PC-9 (cell line): ENCODE measurements at regions of chr17 and their contacts with region 1.

Region 1: GRCh38 chr17:29640413-29640812 is 17.7 kb upstream of the CORO6 start:
- DNase-seq: no peak
- H3K4me3 ChIP-seq: no peak overlapping the region
- H3K27ac ChIP-seq: peak overlapping the region; percentile 88
- H3K4me1 ChIP-seq: peaks cover 44% of the 10 kb centered on the region
- H3K27me3 ChIP-seq: no peaks in the 10 kb centered on the region
- CTCF ChIP-seq: no peak

Region 2: DNA sequence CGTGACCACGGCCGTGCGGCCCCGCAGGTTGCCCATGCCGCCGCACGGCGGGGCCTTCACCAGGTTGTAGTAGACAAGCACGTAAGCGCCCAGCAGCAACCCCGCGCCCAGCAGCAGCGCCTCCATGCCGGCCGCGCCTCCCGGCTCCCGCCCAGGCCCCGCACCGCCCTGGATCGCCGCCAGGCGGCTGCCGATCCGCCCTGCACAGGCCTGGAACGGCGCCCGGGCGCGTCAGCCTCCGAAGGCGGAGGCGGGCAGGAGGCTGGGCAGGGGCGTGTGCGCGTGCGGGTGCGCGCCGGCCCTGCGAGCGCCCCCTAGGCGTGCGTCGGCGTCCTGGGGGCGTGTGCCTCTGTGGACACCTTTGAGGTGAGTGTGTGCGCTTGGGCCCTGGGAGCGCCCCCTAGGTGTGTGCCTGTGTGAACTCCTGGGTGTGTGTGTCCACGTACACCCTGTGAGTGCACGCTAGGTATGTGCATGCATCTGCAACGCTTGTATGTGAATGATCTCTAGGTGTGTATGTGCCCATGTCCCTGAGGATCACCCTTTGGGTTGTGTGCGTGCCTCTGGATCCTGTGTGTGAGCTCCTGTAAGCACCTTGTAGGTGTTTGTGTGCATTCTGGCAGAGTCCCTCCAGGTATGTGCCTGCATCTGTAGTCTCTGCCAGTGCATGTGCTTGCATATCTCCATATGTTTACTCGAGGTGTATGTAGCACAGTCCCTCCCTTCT is 737.4 kb before region 1 on chr17 and contains the start of gene DHRS13:
- CTCF ChIA-PET with region 1: no interaction called
- POLR2A ChIA-PET with region 1: no interaction called
- intact Hi-C with region 1: no loop called
- DNase-seq: peak; percentile 85 to 94
- H3K4me3 ChIP-seq: peak within 1 kb of the TSS; percentile 73
- H3K27ac ChIP-seq: no peak within 1 kb of the TSS
- H3K4me1 ChIP-seq: peaks cover 15% of the 10 kb centered on the region
- H3K27me3 ChIP-seq: no peaks in the 10 kb centered on the region
- CTCF ChIP-seq: peak; percentile 88
- total RNA-seq, gene DHRS13: 15.8 and 17.5 TPM in 2 replicates

Region 3: GRCh38 chr17:29341751-29342150 is 298.7 kb before region 1 on chr17:
- CTCF ChIA-PET with region 1: no interaction called
- POLR2A ChIA-PET with region 1: no interaction called
- intact Hi-C with region 1: no loop called
- DNase-seq: no peak
- H3K4me3 ChIP-seq: no peak overlapping the region
- H3K27ac ChIP-seq: no peak overlapping the region
- H3K4me1 ChIP-seq: no peaks in the 10 kb centered on the region
- H3K27me3 ChIP-seq: no peaks in the 10 kb centered on the region
- CTCF ChIP-seq: no peak

Region 4: GRCh38 chr17:29622337-29623282 is 17.8 kb before region 1 on chr17 and contains the start of gene CORO6:
- CTCF ChIA-PET with region 1: interaction called, 12 read pairs
- POLR2A ChIA-PET with region 1: interaction called, 5 read pairs
- intact Hi-C with region 1: loop called (anchors 1 kb)
- DNase-seq: peak in 1 of 2 experiments; percentile 71
- H3K4me3 ChIP-seq: peak within 1 kb of the TSS; percentile 96
- H3K27ac ChIP-seq: peak within 1 kb of the TSS; percentile 36
- H3K4me1 ChIP-seq: peaks cover 58% of the 10 kb centered on the region
- H3K27me3 ChIP-seq: no peaks in the 10 kb centered on the region
- CTCF ChIP-seq: no peak
- total RNA-seq, gene CORO6: 35.0 and 52.1 TPM in 2 replicates

Region 5: GRCh38 chr17:29718446-29719039 is 78.1 kb after region 1 on chr17:
- CTCF ChIA-PET with region 1: no interaction called
- POLR2A ChIA-PET with region 1: no interaction called
- intact Hi-C with region 1: no loop called
- DNase-seq: peak in 1 of 2 experiments; percentile 69
- H3K4me3 ChIP-seq: no peak overlapping the region
- H3K27ac ChIP-seq: no peak overlapping the region
- H3K4me1 ChIP-seq: 0 out of 2 replicates have a peak, but pooled peaks cover 10% of the 10 kb centered on the region
- H3K27me3 ChIP-seq: no peaks in the 10 kb centered on the region
- CTCF ChIP-seq: no peak

Region 6: GRCh38 chr17:29760761-29761696 is 120.6 kb after region 1 on chr17:
- CTCF ChIA-PET with region 1: interaction called, 3 read pairs
- POLR2A ChIA-PET with region 1: no interaction called
- intact Hi-C with region 1: loop called (anchors 1 kb)
- DNase-seq: peak; percentile 65 to 85
- H3K4me3 ChIP-seq: peak overlapping the region; percentile 95
- H3K27ac ChIP-seq: peak overlapping the region; percentile 58
- H3K4me1 ChIP-seq: peaks cover 12% of the 10 kb centered on the region
- H3K27me3 ChIP-seq: no peaks in the 10 kb centered on the region
- CTCF ChIP-seq: no peak

Region 7: DNA sequence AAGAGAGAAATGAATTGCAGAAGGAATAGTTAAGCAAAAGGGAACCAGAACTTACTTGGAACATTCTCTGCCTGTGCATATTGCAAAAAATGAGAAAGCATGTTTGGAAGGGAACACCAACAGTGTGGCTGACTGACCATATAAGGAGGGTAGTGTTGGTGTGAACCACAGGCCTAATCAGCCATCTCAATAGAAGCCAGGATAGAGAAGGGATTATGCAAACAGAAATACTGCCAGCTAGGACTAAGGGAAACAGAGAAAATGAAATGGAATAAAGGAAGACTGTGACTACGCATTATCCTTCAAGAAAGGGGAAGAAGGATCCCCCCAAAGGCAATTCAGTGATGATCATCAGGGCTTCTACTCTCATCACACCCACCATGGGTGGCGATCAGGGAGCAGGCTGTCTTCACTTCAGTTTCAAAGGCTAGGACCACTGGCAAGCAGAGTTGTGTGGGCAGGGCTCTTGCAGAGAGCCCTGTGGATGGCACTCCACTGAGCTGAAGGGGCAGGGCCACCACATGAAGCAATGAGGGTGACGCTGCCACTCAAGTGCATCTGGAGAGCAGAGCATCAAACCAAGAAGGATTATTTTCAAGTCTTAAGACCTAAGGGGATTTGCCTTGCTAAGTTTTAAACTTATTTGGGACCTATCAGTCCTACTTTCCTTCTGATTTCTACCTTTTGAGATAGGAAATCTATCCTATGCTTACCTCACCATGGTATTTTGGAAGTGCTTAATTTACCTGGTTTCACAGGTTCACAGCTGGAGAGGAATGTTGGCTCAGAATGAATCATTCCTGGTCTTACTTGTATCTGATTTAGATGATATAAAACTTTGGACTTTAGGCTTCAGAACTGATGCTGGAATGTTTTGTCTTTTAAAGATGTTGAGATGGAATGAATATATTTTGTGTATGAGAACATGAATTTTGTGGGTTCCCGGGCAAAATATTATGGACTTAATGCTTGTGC is 149.1 kb after region 1 on chr17:
- CTCF ChIA-PET with region 1: interaction called, 16 read pairs
- POLR2A ChIA-PET with region 1: no interaction called
- intact Hi-C with region 1: no loop called
- DNase-seq: peak in 1 of 2 experiments; percentile 39
- H3K4me3 ChIP-seq: no peak overlapping the region
- H3K27ac ChIP-seq: no peak overlapping the region
- H3K4me1 ChIP-seq: peaks cover 19% of the 10 kb centered on the region
- H3K27me3 ChIP-seq: no peaks in the 10 kb centered on the region
- CTCF ChIP-seq: no peak

Region 8: GRCh38 chr17:29807520-29808351 is 167.3 kb after region 1 on chr17:
- CTCF ChIA-PET with region 1: interaction called, 10 read pairs
- POLR2A ChIA-PET with region 1: no interaction called
- intact Hi-C with region 1: loop called (anchors 1 kb)
- DNase-seq: peak in 1 of 2 experiments; percentile 55
- H3K4me3 ChIP-seq: no peak overlapping the region
- H3K27ac ChIP-seq: no peak overlapping the region
- H3K4me1 ChIP-seq: no peaks in the 10 kb centered on the region
- H3K27me3 ChIP-seq: no peaks in the 10 kb centered on the region
- CTCF ChIP-seq: peak; percentile 87

Region 9: DNA sequence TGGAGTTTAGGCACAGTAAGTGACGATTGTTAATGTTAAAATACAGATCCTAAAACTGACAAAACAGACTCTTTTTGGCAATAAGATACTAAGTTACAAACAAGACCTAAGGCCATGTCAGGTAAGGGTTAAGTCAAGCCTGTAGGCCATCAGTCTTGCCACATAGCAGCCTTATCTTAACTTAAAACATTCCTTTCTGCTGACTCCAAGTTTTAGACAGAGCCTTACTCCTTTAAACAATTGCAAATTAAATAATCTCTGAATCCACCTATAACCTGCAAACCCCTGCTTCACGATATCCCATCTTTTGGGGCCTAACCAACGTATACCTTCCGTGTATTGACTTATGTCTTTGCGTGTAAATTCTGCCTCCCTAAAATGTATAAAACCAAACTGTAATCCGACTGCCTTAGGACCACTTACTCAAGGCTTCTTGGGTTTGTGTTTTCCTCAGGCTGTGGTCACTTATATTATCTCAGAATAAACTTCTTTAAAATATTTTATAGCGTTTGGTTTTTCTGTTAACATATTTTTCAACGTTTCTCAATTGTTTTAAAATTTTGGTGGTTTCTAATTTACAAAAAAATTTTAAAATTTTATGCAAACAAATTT is 365.4 kb after region 1 on chr17:
- CTCF ChIA-PET with region 1: no interaction called
- POLR2A ChIA-PET with region 1: no interaction called
- intact Hi-C with region 1: loop called (anchors 5 kb)
- DNase-seq: peak; percentile 8 to 79
- H3K4me3 ChIP-seq: no peak overlapping the region; the same call in 1 of the 2 replicates
- H3K27ac ChIP-seq: no peak overlapping the region
- H3K4me1 ChIP-seq: peaks cover 22% of the 10 kb centered on the region
- H3K27me3 ChIP-seq: no peaks in the 10 kb centered on the region
- CTCF ChIP-seq: no peak

Region 10: GRCh38 chr17:30093463-30094147 is 453.2 kb after region 1 on chr17:
- CTCF ChIA-PET with region 1: interaction called, 9 read pairs
- POLR2A ChIA-PET with region 1: no interaction called
- intact Hi-C with region 1: loop called (anchors 1 kb)
- DNase-seq: peak; percentile 40 to 56
- H3K4me3 ChIP-seq: no peak overlapping the region
- H3K27ac ChIP-seq: no peak overlapping the region
- H3K4me1 ChIP-seq: no peaks in the 10 kb centered on the region
- H3K27me3 ChIP-seq: 0 out of 2 replicates have a peak, but pooled peaks cover 5% of the 10 kb centered on the region
- CTCF ChIP-seq: peak; percentile 95